K562 (cell line): ENCODE measurements at regions of chr10 and their contacts with region 1.

Region 1: DNA sequence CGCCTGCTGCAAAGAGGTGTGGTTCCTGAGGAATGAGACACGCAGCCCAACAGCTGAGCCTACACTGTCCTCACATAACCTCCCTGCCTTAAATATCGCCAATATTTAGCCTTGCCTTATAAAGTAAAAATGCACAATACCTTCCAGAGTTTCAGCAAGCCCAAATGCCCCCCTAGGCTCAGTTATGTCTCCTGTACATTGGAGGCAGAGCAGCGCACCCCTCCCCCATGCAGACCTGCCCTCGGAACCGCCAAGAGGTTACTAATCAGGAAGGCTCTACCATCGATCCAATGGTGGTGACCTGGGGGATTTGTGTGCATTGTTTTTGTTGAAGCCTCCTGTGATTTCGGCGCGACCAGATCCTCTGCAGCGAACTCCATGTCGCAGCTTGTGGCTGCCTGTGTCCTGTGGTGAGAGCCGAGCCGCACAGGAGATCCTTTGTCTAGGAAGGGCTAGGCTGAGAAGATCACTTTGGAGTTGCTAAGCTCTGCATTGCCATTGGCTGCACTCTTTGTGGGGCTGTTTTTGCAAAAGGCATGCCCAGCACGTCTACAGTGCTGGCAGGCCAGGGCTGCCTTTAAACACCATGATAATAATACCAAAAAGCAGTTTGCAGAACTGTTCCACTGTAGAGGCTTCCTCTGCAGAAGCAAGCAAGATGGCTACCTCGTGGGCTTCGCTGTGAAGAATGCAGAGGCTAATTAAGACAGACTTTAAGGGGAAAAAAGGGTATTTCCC is 40.1 kb downstream of the TET1 start:
- DNase-seq: peak; percentile 58 to 74 (median 66)
- ATAC-seq: peak; percentile 93
- H3K4me3 ChIP-seq: peak overlapping the region; percentile 30
- H3K27ac ChIP-seq: peak overlapping the region; percentile 71; the same call in 2 of the 3 replicates
- H3K4me1 ChIP-seq: peaks cover 18 to 26% of the 10 kb centered on the region in 2 experiments
- H3K27me3 ChIP-seq: no peaks in the 10 kb centered on the region
- CTCF ChIP-seq: no peak
- EP300 ChIP-seq: no peak
- POLR2A ChIP-seq: no peak
- RAD21 ChIP-seq: peak in 1 of 2 experiments; percentile 15; a peak in 1 of 4 replicates

Region 2: DNA sequence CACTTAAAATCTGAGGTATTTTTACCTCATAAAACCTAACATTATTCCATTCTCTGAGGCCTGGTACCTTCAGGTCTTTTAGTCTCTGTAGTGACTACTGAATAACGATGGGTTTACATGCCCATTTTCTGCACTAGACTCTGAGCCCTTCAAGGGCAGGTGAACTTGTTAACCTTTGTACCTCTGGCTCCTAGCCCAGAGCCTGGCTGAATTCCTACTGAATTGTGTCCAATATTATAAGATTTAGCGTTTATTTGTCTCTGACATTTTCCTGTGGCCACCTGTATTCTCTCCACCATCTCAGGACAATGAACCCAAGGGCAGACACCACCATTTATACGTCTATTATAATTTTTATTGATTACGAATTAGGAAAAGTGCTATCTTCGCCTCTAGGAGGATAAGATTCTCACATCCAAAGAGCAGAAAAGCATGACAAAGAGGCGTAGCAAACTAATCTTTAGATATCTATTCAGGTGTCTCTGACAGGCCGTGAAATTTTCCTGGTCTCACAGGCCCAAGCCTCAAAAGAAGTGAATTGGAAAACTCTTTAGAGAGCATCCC is 296.3 kb before region 1 on chr10:
- CTCF ChIA-PET with region 1: no interaction called
- POLR2A ChIA-PET with region 1: no interaction called
- in situ Hi-C with region 1: no loop called
- intact Hi-C with region 1: no loop called
- DNase-seq: no peak
- ATAC-seq: no peak
- H3K4me3 ChIP-seq: no peak overlapping the region
- H3K27ac ChIP-seq: no peak overlapping the region
- H3K4me1 ChIP-seq: no peaks in the 10 kb centered on the region
- H3K27me3 ChIP-seq: no peaks in the 10 kb centered on the region
- CTCF ChIP-seq: no peak
- EP300 ChIP-seq: no peak
- POLR2A ChIP-seq: no peak
- RAD21 ChIP-seq: no peak

Region 3: DNA sequence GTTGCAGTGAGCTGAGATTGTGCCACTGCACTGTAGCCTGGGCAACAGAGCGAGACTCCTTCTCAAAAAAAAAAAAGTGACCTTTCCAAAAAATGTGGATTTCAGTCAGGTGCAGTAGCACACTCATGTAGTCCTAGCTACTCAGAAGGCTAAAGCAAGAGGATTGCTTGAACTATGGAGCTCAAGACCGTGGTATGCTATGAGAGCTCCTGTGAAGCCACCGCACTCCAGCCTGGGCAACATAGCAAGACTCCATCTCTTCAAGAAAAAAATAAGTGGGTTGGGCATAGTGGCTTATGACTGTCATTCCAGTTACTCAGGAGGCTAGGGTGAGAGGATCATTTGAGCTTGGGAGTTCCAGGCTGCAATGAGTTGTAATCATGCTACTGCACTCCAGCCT is 11.0 kb after region 1 on chr10:
- CTCF ChIA-PET with region 1: no interaction called
- POLR2A ChIA-PET with region 1: interaction called, 12 read pairs
- in situ Hi-C with region 1: no loop called
- intact Hi-C with region 1: no loop called
- DNase-seq: no peak
- ATAC-seq: no peak
- H3K4me3 ChIP-seq: no peak overlapping the region
- H3K27ac ChIP-seq: no peak overlapping the region
- H3K4me1 ChIP-seq: no peaks in the 10 kb centered on the region
- H3K27me3 ChIP-seq: no peaks in the 10 kb centered on the region
- CTCF ChIP-seq: no peak
- EP300 ChIP-seq: no peak
- POLR2A ChIP-seq: no peak
- RAD21 ChIP-seq: no peak

Region 4: GRCh38 chr10:68666280-68666760 is 66.1 kb after region 1 on chr10:
- CTCF ChIA-PET with region 1: no interaction called
- POLR2A ChIA-PET with region 1: no interaction called
- in situ Hi-C with region 1: no loop called
- intact Hi-C with region 1: no loop called
- DNase-seq: no peak
- ATAC-seq: no peak
- H3K4me3 ChIP-seq: no peak overlapping the region
- H3K27ac ChIP-seq: no peak overlapping the region
- H3K4me1 ChIP-seq: no peaks in the 10 kb centered on the region
- H3K27me3 ChIP-seq: no peaks in the 10 kb centered on the region
- CTCF ChIP-seq: no peak
- EP300 ChIP-seq: no peak
- POLR2A ChIP-seq: no peak
- RAD21 ChIP-seq: no peak